Colonic mucosa (tissue), 4 donors: ENCODE measurements at regions of chr17 and their contacts with region 1.

Region 1: DNA sequence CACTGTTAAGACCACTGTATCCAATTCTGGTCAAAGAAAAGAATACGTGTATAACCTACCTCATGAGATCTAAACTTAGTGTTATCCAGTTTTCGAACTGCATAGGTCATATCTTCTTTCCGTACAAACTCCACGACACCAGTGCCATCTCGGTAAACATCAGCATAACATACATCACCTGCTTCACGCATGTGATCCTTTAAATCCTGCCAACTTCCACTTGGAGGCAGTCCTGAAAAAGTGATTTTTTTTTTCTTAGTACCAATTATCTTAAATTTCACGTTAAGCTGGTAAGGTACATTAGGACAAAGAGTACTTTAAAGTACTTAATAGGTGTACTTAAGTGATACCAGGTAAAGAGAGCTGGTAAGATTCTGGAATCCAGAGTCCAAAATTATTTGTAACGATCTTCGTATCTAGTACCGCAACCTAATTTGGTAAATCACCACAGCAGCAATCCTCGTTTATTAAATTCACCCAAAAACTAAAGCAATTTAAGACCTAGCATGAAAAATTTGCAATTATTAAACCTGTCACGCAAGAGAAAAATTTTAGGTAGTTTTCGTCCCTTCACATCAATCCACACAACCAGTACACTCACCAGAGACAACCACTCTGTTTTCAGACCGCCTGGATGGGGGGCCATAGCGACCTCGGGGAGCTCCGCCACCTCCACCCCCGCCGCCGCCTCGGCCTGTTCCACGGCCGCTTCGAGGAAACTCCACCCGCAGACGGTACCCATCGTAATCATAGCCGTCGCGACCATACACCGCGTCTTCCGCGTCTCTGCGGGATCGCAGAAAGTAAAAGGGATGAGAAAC is 1.1 kb downstream of the SRSF1 start:
- DNase-seq: no peak
- H3K4me3 ChIP-seq: peak overlapping the region; percentile 83
- H3K27ac ChIP-seq: peak overlapping the region; percentile 97
- H3K4me1 ChIP-seq: peaks cover 12% of the 10 kb centered on the region
- H3K27me3 ChIP-seq: no peaks in the 10 kb centered on the region
- CTCF ChIP-seq: peak; percentile 6

Region 2: GRCh38 chr17:58083491-58084316 is 77.8 kb after region 1 on chr17:
- intact Hi-C with region 1: loop called (anchors 2 kb)
- DNase-seq: peak; percentile 53
- H3K4me3 ChIP-seq: peak overlapping the region; percentile 97
- H3K27ac ChIP-seq: peak overlapping the region; percentile 96
- H3K4me1 ChIP-seq: peaks cover 8% of the 10 kb centered on the region
- H3K27me3 ChIP-seq: no peaks in the 10 kb centered on the region
- CTCF ChIP-seq: no peak

Region 3: DNA sequence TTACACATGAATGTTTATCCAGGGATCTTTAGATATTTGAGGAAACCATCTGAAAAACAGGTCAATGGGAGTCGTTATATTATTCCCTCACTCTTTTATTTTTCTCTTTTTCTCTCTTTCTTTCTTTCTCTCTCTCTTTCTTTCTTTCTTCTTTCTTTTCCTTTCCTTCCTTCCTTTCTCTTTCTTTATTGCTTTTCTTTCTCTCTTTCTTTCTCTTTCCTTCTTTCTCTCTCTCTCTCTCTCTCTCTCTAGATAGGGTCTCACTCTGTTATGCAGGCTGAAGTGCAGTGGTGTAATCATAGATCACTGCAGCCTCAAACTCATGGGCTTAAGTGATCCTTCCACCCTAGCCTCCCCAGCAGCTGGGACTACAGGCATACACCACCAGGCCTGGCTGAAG is 121.9 kb after region 1 on chr17:
- intact Hi-C with region 1: no loop called
- DNase-seq: no peak
- H3K4me3 ChIP-seq: no peak overlapping the region
- H3K27ac ChIP-seq: no peak overlapping the region
- H3K4me1 ChIP-seq: no peaks in the 10 kb centered on the region
- H3K27me3 ChIP-seq: no peaks in the 10 kb centered on the region
- CTCF ChIP-seq: no peak